ENCODE measurements at regions of chr21 and their contacts with region 1.

Region 1: GRCh38 chr21:42089093-42089631 is 18.0 kb downstream of the UMODL1 start:
- DNase-seq: peak in 1 of 2 experiments; percentile 31
- H3K4me3 ChIP-seq: no peak overlapping the region
- H3K4me3 Mint-ChIP-seq: no peak overlapping the region
- H3K27ac Mint-ChIP-seq: no peak overlapping the region
- H3K4me1 ChIP-seq: peaks cover 13% of the 10 kb centered on the region
- H3K4me1 Mint-ChIP-seq: peaks cover 12% of the 10 kb centered on the region
- H3K27me3 ChIP-seq: no peaks in the 10 kb centered on the region
- H3K27me3 Mint-ChIP-seq: no peaks in the 10 kb centered on the region
- CTCF ChIP-seq: no peak

Region 2: GRCh38 chr21:42062236-42063022 is 26.7 kb before region 1 on chr21:
- CTCF ChIA-PET with region 1: no interaction called
- POLR2A ChIA-PET with region 1: no interaction called
- intact Hi-C with region 1: no loop called
- DNase-seq: no peak
- H3K4me3 ChIP-seq: no peak overlapping the region
- H3K4me3 Mint-ChIP-seq: no peak overlapping the region
- H3K27ac Mint-ChIP-seq: no peak overlapping the region
- H3K4me1 ChIP-seq: peaks cover 42% of the 10 kb centered on the region
- H3K4me1 Mint-ChIP-seq: peaks cover 14% of the 10 kb centered on the region
- H3K27me3 ChIP-seq: no peaks in the 10 kb centered on the region
- H3K27me3 Mint-ChIP-seq: no peaks in the 10 kb centered on the region
- CTCF ChIP-seq: no peak

Region 3: GRCh38 chr21:42102076-42102475 is 12.9 kb after region 1 on chr21:
- CTCF ChIA-PET with region 1: no interaction called
- POLR2A ChIA-PET with region 1: no interaction called
- intact Hi-C with region 1: loop called (anchors 2 kb)
- DNase-seq: peak in 1 of 2 experiments; percentile 15
- H3K4me3 ChIP-seq: no peak overlapping the region
- H3K4me3 Mint-ChIP-seq: no peak overlapping the region
- H3K27ac Mint-ChIP-seq: peak overlapping the region; percentile 88
- H3K4me1 ChIP-seq: peaks cover 70% of the 10 kb centered on the region
- H3K4me1 Mint-ChIP-seq: peaks cover 40% of the 10 kb centered on the region
- H3K27me3 ChIP-seq: no peaks in the 10 kb centered on the region
- H3K27me3 Mint-ChIP-seq: no peaks in the 10 kb centered on the region
- CTCF ChIP-seq: no peak

Region 4: DNA sequence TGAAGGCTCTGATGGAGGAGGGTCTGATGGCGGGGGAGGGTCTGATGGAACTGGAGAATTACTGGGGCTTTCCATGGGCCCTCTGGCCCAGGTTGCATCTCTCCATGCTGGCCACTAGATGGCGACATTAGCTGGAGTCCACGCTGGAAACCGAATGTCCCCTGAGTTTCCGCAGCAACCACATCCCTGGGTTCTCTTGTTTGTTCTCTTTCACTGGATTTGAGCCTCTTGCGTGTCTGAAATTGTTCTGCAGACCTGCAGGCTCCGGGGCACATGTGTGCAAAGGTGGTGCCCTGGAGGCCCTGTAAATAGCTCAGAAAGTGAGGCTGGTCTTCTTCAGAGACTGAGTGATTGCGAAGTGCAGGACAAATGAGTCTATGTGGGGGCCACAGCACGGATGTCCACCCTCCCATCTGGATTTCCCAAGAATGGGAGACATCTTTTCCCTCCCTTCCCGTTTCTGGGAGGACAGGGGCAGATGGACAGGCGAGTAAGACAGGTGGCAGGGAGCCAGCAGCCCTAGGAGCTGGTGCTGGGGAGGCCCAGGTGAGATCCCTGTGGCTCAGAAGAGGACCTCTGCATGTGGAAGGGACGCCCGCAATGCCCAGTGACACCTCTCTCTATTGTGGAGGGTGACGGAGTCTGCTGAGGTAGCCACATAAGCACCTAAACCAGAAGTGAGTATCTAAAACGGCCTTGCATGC is 56.6 kb after region 1 on chr21:
- CTCF ChIA-PET with region 1: no interaction called
- POLR2A ChIA-PET with region 1: no interaction called
- intact Hi-C with region 1: no loop called
- DNase-seq: peak; percentile 57 to 70
- H3K4me3 ChIP-seq: no peak overlapping the region
- H3K4me3 Mint-ChIP-seq: no peak overlapping the region
- H3K27ac Mint-ChIP-seq: no peak overlapping the region
- H3K4me1 ChIP-seq: no peaks in the 10 kb centered on the region; the same call in 1 of the 2 replicates
- H3K4me1 Mint-ChIP-seq: peaks cover 10% of the 10 kb centered on the region
- H3K27me3 ChIP-seq: no peaks in the 10 kb centered on the region
- H3K27me3 Mint-ChIP-seq: no peaks in the 10 kb centered on the region
- CTCF ChIP-seq: peak; percentile 83 to 90

Region 5: GRCh38 chr21:42337830-42338728 is 248.9 kb after region 1 on chr21:
- CTCF ChIA-PET with region 1: no interaction called
- POLR2A ChIA-PET with region 1: no interaction called
- intact Hi-C with region 1: no loop called
- DNase-seq: peak; percentile 81
- H3K4me3 ChIP-seq: no peak overlapping the region
- H3K4me3 Mint-ChIP-seq: no peak overlapping the region
- H3K27ac Mint-ChIP-seq: peak overlapping the region; percentile 81
- H3K4me1 ChIP-seq: peaks cover 5% of the 10 kb centered on the region; the same call in 1 of the 2 replicates
- H3K4me1 Mint-ChIP-seq: peaks cover 17% of the 10 kb centered on the region
- H3K27me3 ChIP-seq: no peaks in the 10 kb centered on the region
- H3K27me3 Mint-ChIP-seq: no peaks in the 10 kb centered on the region
- CTCF ChIP-seq: peak; percentile 62 to 73

Region 6: GRCh38 chr21:42392721-42393442 is 303.7 kb after region 1 on chr21:
- CTCF ChIA-PET with region 1: no interaction called
- POLR2A ChIA-PET with region 1: no interaction called
- intact Hi-C with region 1: no loop called
- DNase-seq: no peak
- H3K4me3 ChIP-seq: no peak overlapping the region
- H3K4me3 Mint-ChIP-seq: no peak overlapping the region
- H3K27ac Mint-ChIP-seq: no peak overlapping the region
- H3K4me1 ChIP-seq: peaks cover 10% of the 10 kb centered on the region; the same call in 1 of the 2 replicates
- H3K4me1 Mint-ChIP-seq: peaks cover 27% of the 10 kb centered on the region
- H3K27me3 ChIP-seq: no peaks in the 10 kb centered on the region
- H3K27me3 Mint-ChIP-seq: no peaks in the 10 kb centered on the region
- CTCF ChIP-seq: no peak